Activated T-helper 2 cell treated with anti-CD3 and anti-CD28 coated beads, Interferon-gamma antibody, Interleukin-2, Interleukin-4, amounts not matched to agents 10 μg/mL and 5 μg/mL and 100 μg/mL, durations not matched to agents 14 hours and 24 hours and 36 hours (primary cell): ENCODE measurements at regions of chr13 and their contacts with region 1.

Region 1: DNA sequence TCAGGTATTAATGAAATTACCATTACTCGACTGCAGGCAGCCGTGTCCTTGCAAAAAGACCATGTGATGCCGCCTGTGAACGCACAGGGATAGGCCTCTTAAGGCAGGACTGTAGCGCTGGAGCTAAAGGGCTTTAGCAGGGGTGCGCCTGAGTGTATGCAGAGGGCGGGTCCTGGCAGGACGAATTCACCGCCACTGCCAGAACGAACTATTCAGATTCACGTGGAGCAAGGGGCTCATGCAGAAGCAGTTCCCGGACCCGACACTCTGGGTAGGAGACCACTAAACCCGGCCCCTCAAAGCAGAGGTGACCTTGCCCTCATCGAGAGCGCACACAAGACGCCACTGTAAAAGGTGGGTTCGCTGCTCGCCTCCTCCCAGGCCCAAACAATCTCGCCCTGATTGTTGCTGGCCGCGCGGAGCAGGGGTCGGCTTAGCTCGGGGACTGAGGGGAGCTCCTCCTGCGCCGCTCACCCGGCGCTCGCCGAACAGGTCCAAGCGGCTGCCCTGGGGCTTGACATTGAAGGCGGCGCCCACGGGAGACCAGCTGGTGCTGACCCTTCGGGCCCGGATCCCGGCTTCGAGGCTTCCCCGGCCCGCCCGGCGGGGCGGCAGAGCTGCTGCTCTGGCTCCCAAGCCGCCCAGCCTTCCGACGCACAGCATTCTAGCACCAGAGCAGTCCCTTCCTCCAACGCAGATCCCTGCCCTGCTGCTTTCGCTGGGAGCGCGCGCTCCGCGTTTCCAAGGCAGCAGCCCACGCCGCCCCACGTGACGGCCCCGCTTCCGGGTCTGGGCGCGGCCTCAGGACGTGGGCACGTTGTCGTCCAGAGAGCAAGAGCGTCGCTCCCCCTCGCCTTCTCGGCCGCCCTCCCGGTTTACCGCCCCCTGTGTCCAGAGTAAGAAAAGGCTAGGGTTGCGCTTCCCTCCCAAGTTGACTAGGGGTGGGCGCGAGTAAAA is at the start of gene MIPEP:
- DNase-seq: peak; percentile 85
- H3K4me3 Mint-ChIP-seq: peak within 1 kb of the TSS; percentile 88
- H3K27ac Mint-ChIP-seq: peak within 1 kb of the TSS; percentile 69
- H3K4me1 Mint-ChIP-seq: peaks cover 13% of the 10 kb centered on the region
- H3K27me3 Mint-ChIP-seq: no peaks in the 10 kb centered on the region
- total RNA-seq, gene MIPEP: 9.9 TPM in 2 replicates

Region 2: GRCh38 chr13:23558675-23559536 is 330.0 kb before region 1 on chr13:
- intact Hi-C with region 1: no loop called
- DNase-seq: no peak
- H3K4me3 Mint-ChIP-seq: no peak overlapping the region
- H3K27ac Mint-ChIP-seq: no peak overlapping the region
- H3K4me1 Mint-ChIP-seq: peaks cover 2% of the 10 kb centered on the region
- H3K27me3 Mint-ChIP-seq: peaks cover 6% of the 10 kb centered on the region

Region 3: GRCh38 chr13:23579072-23579895 is 309.7 kb before region 1 on chr13:
- intact Hi-C with region 1: loop called (anchors 1 kb)
- DNase-seq: peak; percentile 88
- H3K4me3 Mint-ChIP-seq: peak overlapping the region; percentile 70
- H3K27ac Mint-ChIP-seq: no peak overlapping the region
- H3K4me1 Mint-ChIP-seq: peaks cover 15% of the 10 kb centered on the region
- H3K27me3 Mint-ChIP-seq: peaks cover 66% of the 10 kb centered on the region

Region 4: GRCh38 chr13:23639674-23640073 is 249.3 kb before region 1 on chr13:
- intact Hi-C with region 1: no loop called
- DNase-seq: no peak
- H3K4me3 Mint-ChIP-seq: no peak overlapping the region
- H3K27ac Mint-ChIP-seq: no peak overlapping the region
- H3K4me1 Mint-ChIP-seq: no peaks in the 10 kb centered on the region
- H3K27me3 Mint-ChIP-seq: peaks cover 7% of the 10 kb centered on the region